Natural killer cell (primary cell): ENCODE measurements at regions of chr15 and their contacts with region 1.

Region 1: GRCh38 chr15:28885630-28886430 is at the start of gene APBA2:
- DNase-seq: peak; percentile 56 to 70
- ATAC-seq: peak; percentile 69 to 79 (median 77)
- H3K4me3 ChIP-seq: peak within 1 kb of the TSS; percentile 42
- H3K4me3 Mint-ChIP-seq: peak within 1 kb of the TSS; percentile 90
- H3K27ac ChIP-seq: no peak within 1 kb of the TSS
- H3K27ac Mint-ChIP-seq: peak within 1 kb of the TSS in 1 of 2 donors; percentile 70
- H3K4me1 ChIP-seq: peaks cover 48% of the 10 kb centered on the region
- H3K4me1 Mint-ChIP-seq: peaks cover 33 to 45% of the 10 kb centered on the region in 2 donors
- H3K27me3 ChIP-seq: no peaks in the 10 kb centered on the region
- H3K27me3 Mint-ChIP-seq: no peaks in the 10 kb centered on the region
- CTCF ChIP-seq: no peak
- total RNA-seq, gene APBA2: 96.4 to 119 (median 97.9) TPM

Region 2: GRCh38 chr15:28974142-28974541 is 88.3 kb after region 1 on chr15:
- intact Hi-C with region 1: loop called (anchors 1 kb)
- DNase-seq: peak; percentile 51 to 73
- ATAC-seq: peak; percentile 82 to 96 (median 90)
- H3K4me3 ChIP-seq: no peak overlapping the region
- H3K4me3 Mint-ChIP-seq: peak overlapping the region; percentile 61
- H3K27ac ChIP-seq: peak overlapping the region; percentile 77
- H3K27ac Mint-ChIP-seq: peak overlapping the region; percentile 93 to 95
- H3K4me1 ChIP-seq: peaks cover 8% of the 10 kb centered on the region
- H3K4me1 Mint-ChIP-seq: peaks cover 53 to 57% of the 10 kb centered on the region in 2 donors
- H3K27me3 ChIP-seq: no peaks in the 10 kb centered on the region
- H3K27me3 Mint-ChIP-seq: no peaks in the 10 kb centered on the region
- CTCF ChIP-seq: no peak